A549 (cell line): ENCODE measurements at regions of chr19 and their contacts with region 1.

Region 1: GRCh38 chr19:4638828-4639530 is at the start of gene TNFAIP8L1:
- DNase-seq: peak; percentile 92 to 93
- ATAC-seq: peak; percentile 60 to 80
- H3K4me3 ChIP-seq: peak within 1 kb of the TSS; percentile 66
- H3K27ac ChIP-seq: peak within 1 kb of the TSS; percentile 79 to 93
- H3K4me1 ChIP-seq: peaks cover 26% of the 10 kb centered on the region
- CTCF ChIP-seq: no peak
- EP300 ChIP-seq: no peak
- POLR2A ChIP-seq: no peak; the same call in 1 of the 2 replicates
- RAD21 ChIP-seq: no peak
- polyA plus RNA-seq, gene TNFAIP8L1: 3.2 TPM in 2 replicates

Region 2: DNA sequence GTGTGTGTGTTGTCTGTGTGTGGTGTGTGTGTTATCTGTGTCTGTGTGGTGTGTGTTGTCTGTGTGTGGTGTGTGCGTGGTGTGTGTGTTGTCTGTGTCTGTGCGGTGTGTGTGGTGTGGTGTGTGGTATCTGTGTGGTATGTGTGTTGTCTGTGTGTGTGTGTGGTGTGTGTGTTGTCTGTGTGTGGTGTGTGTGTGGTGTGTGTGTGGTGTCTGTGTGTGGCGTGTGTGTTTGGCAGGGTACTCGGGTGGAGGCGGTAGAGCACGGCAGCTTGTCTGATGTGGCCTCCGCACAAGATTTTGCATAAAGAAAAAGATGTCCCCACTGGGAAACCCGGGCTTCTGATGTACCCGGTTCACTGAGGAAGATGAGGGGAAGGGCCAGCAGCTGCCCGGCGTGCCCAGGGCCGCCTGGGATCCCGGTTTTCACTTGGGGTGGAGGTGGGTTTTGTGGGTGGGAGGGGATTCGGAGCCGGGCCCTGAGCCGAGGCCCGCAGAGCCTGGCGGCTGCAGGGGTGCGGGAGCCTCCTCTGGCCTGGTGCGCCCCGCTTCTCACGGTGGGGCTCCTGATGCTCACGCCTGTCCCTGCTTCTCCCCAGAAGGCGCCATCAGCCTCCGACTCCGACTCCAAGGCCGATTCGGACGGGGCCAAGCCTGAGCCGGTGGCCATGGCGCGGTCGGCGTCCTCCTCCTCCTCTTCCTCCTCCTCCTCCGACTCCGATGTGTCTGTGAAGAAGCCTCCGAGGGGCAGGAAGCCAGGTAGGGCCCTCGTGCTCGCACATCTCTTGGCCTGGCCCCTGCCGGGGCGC is 145.7 kb before region 1 on chr19:
- CTCF ChIA-PET with region 1: no interaction called
- POLR2A ChIA-PET with region 1: no interaction called
- DNase-seq: no peak
- ATAC-seq: no peak
- H3K4me3 ChIP-seq: no peak overlapping the region
- H3K27ac ChIP-seq: no peak overlapping the region
- H3K4me1 ChIP-seq: no peaks in the 10 kb centered on the region
- CTCF ChIP-seq: no peak
- EP300 ChIP-seq: no peak
- POLR2A ChIP-seq: no peak
- RAD21 ChIP-seq: no peak

Region 3: DNA sequence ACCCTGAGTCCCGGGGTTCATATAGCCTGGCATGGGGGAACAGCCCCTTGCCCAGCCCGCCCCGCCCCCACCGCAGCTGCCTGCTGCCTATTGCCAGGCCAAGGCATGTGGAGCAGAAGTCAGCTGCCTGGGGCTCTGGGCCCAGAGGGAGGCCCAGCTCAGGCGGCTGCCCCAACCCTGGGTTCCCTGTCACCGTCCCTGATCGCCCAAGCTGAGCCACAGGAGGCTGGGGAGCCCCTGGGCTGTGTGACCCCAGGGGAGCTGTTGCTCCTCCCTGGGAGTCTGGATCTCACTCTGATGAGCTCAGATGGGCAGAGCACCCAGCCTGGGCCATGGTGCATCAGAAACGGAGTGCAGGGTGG is 122.1 kb before region 1 on chr19:
- CTCF ChIA-PET with region 1: interaction called, 10 read pairs
- POLR2A ChIA-PET with region 1: no interaction called
- DNase-seq: no peak
- ATAC-seq: peak; percentile 19 to 37; a peak in 3 of 6 replicates
- H3K4me3 ChIP-seq: no peak overlapping the region
- H3K27ac ChIP-seq: peak overlapping the region; percentile 40 to 82; a peak in 3 of 6 replicates
- H3K4me1 ChIP-seq: peaks cover 15% of the 10 kb centered on the region
- CTCF ChIP-seq: no peak
- EP300 ChIP-seq: no peak
- POLR2A ChIP-seq: no peak
- RAD21 ChIP-seq: no peak

Region 4: GRCh38 chr19:4557971-4558941 is 80.7 kb before region 1 on chr19:
- CTCF ChIA-PET with region 1: interaction called, 22 read pairs
- POLR2A ChIA-PET with region 1: no interaction called
- DNase-seq: no peak
- ATAC-seq: peak in 1 of 2 experiments; percentile 9; a peak in 1 of 6 replicates
- H3K4me3 ChIP-seq: no peak overlapping the region
- H3K27ac ChIP-seq: peak overlapping the region in 1 of 2 experiments; percentile 76; a peak in 2 of 6 replicates
- H3K4me1 ChIP-seq: peaks cover 13% of the 10 kb centered on the region
- CTCF ChIP-seq: peak; percentile 77
- EP300 ChIP-seq: no peak
- POLR2A ChIP-seq: no peak
- RAD21 ChIP-seq: peak; percentile 45 to 46; a peak in 4 of 5 replicates

Region 5: DNA sequence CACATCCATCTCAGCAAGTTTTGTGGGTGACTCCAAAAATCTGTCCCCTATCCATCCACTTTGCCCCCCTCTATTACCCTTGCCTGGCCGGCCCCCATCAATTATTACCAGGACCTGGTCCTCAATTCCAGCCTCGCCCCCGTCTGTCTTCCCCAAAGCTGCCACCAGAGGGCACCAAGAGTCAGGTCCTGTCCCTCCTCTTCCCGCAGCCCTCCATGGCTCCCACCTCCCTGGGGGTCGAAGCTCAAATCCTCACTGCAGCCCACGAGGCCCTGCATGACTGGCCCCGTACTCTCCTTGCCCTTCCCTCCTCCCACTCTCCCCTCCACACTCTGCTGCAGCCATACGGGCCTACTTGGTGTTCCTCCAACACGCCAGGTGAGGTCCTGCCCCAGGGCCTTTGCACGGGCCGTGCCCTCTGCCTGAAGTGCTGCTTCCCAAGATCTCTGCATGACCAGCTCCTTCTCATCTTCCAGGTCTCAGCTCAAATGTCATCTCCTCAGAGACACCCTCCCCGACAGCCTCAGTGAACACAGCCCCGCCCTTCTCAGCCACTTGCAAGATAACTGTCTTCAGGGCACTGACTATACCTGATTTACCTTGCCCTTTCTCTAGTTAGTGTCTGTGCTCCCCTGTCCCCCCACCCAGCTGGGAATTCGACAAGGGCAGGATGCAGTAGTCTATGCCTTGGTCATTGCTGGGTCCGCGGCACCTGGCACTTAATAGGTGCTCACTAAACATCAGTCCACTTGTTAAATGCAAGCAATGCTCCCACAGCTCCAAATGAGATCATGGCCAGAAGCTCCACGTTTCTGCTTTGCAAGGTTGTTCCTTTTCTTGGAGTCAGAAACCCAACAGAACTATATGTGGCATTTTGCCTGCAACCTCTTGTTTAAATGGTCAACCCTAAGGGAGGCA is 62.7 kb before region 1 on chr19:
- CTCF ChIA-PET with region 1: interaction called, 118 read pairs
- POLR2A ChIA-PET with region 1: interaction called, 3 read pairs
- DNase-seq: peak; percentile 72
- ATAC-seq: peak; percentile 49 to 71; a peak in 5 of 6 replicates
- H3K4me3 ChIP-seq: no peak overlapping the region
- H3K27ac ChIP-seq: peak overlapping the region; percentile 85 to 99
- H3K4me1 ChIP-seq: peaks cover 36% of the 10 kb centered on the region
- CTCF ChIP-seq: peak; percentile 63
- EP300 ChIP-seq: no peak
- POLR2A ChIP-seq: no peak
- RAD21 ChIP-seq: peak; percentile 48 to 50; a peak in 4 of 5 replicates

Region 6: DNA sequence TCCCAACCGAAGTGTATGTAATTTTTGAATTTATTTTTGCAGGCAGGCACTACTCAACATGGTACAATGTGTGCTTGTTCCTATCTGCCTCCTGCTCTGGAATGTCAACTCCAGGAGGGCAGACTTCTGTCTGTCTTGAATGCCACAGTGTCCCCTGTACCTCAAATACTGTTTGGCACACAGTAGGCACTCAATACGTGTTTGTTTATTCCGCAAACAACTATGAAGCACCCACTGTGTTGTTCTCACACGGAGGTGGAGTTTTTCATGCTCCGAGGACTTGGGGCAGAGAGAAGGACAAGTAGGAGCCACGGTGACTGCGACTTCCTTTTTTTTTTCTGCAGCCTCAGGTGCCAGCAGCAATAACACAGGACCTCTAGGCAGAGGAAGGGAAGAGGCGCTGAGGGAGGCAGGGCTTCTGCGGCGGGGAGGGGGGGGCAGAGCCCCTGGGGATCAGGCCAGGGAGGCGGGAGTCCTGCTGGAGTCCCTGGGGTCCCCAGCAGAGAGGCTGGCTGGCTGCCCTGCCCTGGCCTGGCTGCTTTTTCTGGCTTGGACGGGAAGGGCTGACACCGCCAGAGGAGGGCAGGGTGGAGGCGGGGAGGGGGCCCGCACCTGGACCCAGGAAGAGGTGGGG is 29.0 kb before region 1 on chr19:
- CTCF ChIA-PET with region 1: interaction called, 10 read pairs
- POLR2A ChIA-PET with region 1: no interaction called
- DNase-seq: no peak
- ATAC-seq: peak; percentile 74 to 77
- H3K4me3 ChIP-seq: no peak overlapping the region
- H3K27ac ChIP-seq: peak overlapping the region in 1 of 2 experiments; percentile 46; a peak in 2 of 6 replicates
- H3K4me1 ChIP-seq: no peaks in the 10 kb centered on the region
- CTCF ChIP-seq: no peak
- EP300 ChIP-seq: no peak
- POLR2A ChIP-seq: no peak
- RAD21 ChIP-seq: no peak

Region 7: GRCh38 chr19:4624733-4625362 is 14.1 kb before region 1 on chr19:
- CTCF ChIA-PET with region 1: interaction called, 39 read pairs
- POLR2A ChIA-PET with region 1: no interaction called
- DNase-seq: peak; percentile 36 to 79
- ATAC-seq: peak; percentile 75 to 78; a peak in 4 of 6 replicates
- H3K4me3 ChIP-seq: no peak overlapping the region
- H3K27ac ChIP-seq: peak overlapping the region; percentile 40 to 71; a peak in 4 of 6 replicates
- H3K4me1 ChIP-seq: peaks cover 22% of the 10 kb centered on the region; the same call in 2 of the 3 replicates
- CTCF ChIP-seq: peak; percentile 33
- EP300 ChIP-seq: no peak
- POLR2A ChIP-seq: no peak
- RAD21 ChIP-seq: peak in 1 of 2 experiments; percentile 16; a peak in 1 of 5 replicates